Dorsolateral prefrontal cortex (tissue), 120 donors: ENCODE measurements at regions of chr7 and their contacts with region 1.

Region 1: GRCh38 chr7:155796381-155797261 is 15.6 kb downstream of the SHH start:
- DNase-seq: peak; percentile 40 to 82 (median 54)
- H3K4me3 ChIP-seq: peak overlapping the region in 23 of 59 donors; percentile 5 to 55 (median 21)
- H3K27ac ChIP-seq: no peak overlapping the region
- H3K27me3 ChIP-seq: peaks cover 0 to 34% (median 10%) of the 10 kb centered on the region in 45 donors
- CTCF ChIP-seq: peak; percentile 57 to 95 (median 86)

Region 2: GRCh38 chr7:155870334-155871180 is 73.9 kb after region 1 on chr7:
- intact Hi-C with region 1: no loop called
- DNase-seq: no peak
- H3K4me3 ChIP-seq: no peak overlapping the region
- H3K27ac ChIP-seq: no peak overlapping the region
- H3K27me3 ChIP-seq: peaks cover 0 to 7% (median 0%) of the 10 kb centered on the region in 45 donors
- CTCF ChIP-seq: no peak

Region 3: DNA sequence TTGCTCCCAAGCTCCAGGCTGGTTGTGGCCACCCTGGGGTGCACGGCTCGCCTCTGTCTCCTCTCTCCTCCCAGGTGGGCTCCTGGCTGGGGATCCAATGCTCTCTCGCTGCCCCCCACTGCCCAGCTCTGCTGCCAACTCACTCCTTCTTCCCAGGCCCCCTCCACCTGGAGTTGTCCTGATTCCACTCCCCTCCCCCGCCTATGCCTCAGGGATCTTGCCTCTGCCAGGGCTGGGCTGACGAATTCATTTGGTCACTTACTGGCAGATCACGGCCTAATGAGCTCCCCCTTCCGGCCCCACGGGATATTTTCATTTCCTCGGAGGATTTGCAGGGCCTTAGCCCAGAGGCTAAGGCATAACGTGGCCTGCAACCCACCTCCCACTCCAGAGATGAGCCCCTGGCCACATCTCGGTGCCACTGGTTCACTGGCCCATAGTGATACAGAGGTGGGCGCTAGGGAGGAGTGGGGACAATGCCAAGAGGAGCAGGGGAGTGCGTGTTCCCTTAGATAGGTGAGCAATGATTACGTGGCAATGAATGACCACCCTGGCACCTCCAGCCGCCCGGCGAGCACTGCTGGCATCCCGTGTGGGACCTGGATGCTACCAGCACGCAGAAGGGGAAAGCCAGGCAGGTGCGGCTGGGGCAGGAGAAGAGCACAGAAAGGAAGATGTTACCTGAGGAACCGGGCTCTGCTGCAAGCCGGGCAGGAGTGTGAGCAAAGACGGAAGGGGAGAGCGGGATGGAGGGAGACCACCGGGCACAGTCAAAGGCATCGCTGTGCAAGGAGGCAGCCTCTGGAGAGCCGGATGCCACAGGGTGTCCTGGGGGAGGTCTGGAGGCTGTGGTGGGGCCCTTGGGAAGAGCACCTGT is 360.4 kb after region 1 on chr7:
- intact Hi-C with region 1: loop called in 1 of 2 experiments (anchors 10 kb)
- DNase-seq: peak in 1 of 10 donors; percentile 22
- H3K4me3 ChIP-seq: no peak overlapping the region
- H3K27ac ChIP-seq: no peak overlapping the region
- H3K27me3 ChIP-seq: peaks cover 0 to 3% (median 0%) of the 10 kb centered on the region in 45 donors
- CTCF ChIP-seq: peak in 22 of 56 donors; percentile 8 to 33 (median 22)

Region 4: DNA sequence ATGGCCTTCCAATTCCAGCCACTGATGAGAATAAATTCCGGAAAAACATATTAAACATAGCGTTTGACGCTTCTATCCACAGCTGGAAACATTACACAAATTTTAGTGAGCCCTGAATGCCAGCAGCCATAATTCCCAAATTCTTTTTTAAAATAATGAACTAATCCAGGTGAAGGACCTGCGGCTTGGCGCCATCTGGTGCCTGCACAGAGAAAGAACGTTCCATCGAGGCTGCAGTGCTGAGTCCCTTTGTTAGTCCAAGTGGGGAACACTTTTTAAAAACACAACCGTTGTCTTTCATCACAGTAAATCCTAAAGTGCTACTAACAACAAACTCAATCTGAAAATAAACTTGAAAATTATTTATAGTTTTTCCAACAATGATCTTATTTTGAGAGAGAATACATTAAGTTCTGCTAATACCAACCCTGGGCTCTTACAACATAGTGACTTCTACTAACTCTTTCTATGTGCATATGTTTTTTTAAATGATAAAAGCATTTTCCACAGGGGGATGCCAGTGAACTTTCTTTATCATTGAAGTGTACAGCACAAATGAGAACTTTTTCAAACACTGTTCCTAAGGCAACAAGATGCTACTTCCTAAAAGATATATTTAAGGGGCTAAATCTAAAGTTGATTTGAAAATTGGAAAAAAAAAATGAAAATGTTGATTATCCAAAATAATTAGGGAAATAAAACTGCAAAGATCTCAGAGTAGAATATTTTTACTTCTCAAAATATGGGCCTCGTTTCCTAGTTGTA is 677.0 kb after region 1 on chr7:
- intact Hi-C with region 1: loop called in 1 of 2 experiments (anchors 5 kb)
- DNase-seq: peak in 7 of 10 donors; percentile 26 to 74 (median 57)
- H3K4me3 ChIP-seq: no peak overlapping the region
- H3K27ac ChIP-seq: no peak overlapping the region
- H3K27me3 ChIP-seq: peaks cover 0 to 4% (median 0%) of the 10 kb centered on the region in 45 donors
- CTCF ChIP-seq: peak; percentile 33 to 82 (median 67)

Region 5: DNA sequence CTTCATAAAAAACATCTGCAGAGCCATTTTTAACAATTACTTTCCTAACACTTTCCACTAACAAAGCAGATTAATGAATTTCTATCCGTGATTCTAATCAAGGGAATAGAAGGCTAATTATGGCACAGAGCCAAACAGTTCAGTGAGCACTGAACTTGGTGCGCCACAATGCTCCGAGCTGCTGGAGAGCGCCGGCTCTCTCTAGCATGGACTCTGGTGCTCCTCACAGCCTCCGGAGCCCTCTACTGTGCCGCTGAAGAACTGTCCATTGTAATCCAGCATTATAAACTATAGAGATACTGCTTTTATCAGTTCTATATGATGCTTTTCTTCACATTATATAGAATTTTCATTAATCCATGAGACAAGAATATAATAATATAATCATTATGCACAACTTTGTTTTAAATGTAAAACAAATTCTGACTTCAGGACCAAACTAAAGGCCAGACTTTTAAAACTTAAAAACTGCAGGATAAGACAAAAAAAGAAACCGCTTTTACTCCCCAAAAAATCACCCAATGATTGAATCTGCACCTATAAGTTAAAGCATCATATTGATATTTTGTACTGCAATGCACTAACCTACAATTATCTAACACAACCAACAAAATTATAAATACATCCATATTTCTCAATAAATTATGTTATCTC is 967.5 kb after region 1 on chr7:
- intact Hi-C with region 1: loop called in 1 of 2 experiments (anchors 2 kb)
- DNase-seq: peak; percentile 47 to 80 (median 76)
- H3K4me3 ChIP-seq: no peak overlapping the region
- H3K27ac ChIP-seq: no peak overlapping the region
- H3K27me3 ChIP-seq: no peaks in the 10 kb centered on the region
- CTCF ChIP-seq: peak; percentile 22 to 98 (median 80)

Region 6: DNA sequence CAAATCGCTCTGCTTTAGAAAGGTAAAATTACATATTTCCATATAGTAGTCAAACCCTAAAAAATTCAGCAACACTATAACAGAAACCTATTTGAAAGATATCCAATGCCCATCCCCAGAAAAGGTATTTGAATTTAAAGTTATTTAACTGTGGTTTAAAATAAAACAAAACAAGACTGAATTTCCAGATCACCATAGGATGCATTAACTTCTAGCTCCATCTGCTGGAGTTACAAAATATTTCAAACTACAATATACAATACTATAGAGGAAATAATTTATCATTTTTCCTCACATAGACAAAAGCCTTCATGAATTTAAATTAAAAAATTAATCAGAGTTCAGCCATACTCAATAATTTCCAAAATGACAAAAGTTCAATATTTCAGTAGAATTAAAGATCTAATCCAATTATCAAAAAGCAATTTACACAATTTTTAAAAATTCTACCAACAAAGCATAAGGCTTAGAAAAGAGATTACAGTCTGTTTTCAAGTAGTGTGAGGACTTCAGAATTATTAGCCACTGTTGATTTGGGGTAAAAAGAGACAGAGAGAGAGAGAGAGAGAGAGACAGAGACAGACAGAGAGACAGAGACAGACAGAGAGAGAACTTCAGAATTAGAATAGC is 1020.4 kb after region 1 on chr7:
- intact Hi-C with region 1: loop called (anchors 2 to 5 kb)
- DNase-seq: no peak
- H3K4me3 ChIP-seq: no peak overlapping the region
- H3K27ac ChIP-seq: no peak overlapping the region
- H3K27me3 ChIP-seq: no peaks in the 10 kb centered on the region
- CTCF ChIP-seq: peak in 55 of 56 donors; percentile 25 to 73 (median 53)